Activated CD4-positive, alpha-beta T cell treated with anti-CD3 and anti-CD28 coated beads for 36 hours (primary cell): ENCODE measurements at regions of chr4 and their contacts with region 1.

Region 1: GRCh38 chr4:109729718-109730618 is at the start of gene PLA2G12A:
- DNase-seq: peak; percentile 85
- ATAC-seq: peak; percentile 87
- H3K4me3 Mint-ChIP-seq: peak within 1 kb of the TSS; percentile 84
- H3K27ac Mint-ChIP-seq: peak within 1 kb of the TSS; percentile 71
- H3K4me1 Mint-ChIP-seq: peaks cover 14% of the 10 kb centered on the region
- H3K27me3 Mint-ChIP-seq: no peaks in the 10 kb centered on the region
- total RNA-seq, gene PLA2G12A: 17.9 to 31.1 TPM

Region 2: DNA sequence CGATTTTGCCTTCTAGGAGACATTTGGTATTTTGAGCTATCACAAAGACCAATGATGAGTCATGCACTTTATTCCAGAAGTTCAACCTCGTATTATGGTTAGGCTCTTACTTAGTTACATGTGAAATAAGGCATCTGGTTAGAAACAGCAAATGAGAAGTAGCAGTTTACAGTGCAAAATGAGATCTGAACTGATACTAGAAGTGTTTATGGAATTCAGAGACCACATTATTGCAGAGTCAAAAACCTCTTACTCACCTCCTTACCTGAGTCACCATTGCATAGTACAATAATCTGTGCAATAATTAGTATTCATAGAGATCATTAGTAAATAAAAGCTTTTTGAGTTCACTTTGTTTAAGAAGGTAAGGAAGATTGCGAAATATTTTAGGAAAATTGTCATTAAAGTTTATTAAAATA is 257.6 kb before region 1 on chr4:
- CTCF ChIA-PET with region 1: no interaction called
- POLR2A ChIA-PET with region 1: interaction called, 10 read pairs
- intact Hi-C with region 1: no loop called
- DNase-seq: no peak
- ATAC-seq: peak; percentile 85
- H3K4me3 Mint-ChIP-seq: no peak overlapping the region
- H3K27ac Mint-ChIP-seq: peak overlapping the region; percentile 17
- H3K4me1 Mint-ChIP-seq: peaks cover 50% of the 10 kb centered on the region
- H3K27me3 Mint-ChIP-seq: no peaks in the 10 kb centered on the region